ENCODE measurements at regions of chr12 and their contacts with region 1.

Region 1: DNA sequence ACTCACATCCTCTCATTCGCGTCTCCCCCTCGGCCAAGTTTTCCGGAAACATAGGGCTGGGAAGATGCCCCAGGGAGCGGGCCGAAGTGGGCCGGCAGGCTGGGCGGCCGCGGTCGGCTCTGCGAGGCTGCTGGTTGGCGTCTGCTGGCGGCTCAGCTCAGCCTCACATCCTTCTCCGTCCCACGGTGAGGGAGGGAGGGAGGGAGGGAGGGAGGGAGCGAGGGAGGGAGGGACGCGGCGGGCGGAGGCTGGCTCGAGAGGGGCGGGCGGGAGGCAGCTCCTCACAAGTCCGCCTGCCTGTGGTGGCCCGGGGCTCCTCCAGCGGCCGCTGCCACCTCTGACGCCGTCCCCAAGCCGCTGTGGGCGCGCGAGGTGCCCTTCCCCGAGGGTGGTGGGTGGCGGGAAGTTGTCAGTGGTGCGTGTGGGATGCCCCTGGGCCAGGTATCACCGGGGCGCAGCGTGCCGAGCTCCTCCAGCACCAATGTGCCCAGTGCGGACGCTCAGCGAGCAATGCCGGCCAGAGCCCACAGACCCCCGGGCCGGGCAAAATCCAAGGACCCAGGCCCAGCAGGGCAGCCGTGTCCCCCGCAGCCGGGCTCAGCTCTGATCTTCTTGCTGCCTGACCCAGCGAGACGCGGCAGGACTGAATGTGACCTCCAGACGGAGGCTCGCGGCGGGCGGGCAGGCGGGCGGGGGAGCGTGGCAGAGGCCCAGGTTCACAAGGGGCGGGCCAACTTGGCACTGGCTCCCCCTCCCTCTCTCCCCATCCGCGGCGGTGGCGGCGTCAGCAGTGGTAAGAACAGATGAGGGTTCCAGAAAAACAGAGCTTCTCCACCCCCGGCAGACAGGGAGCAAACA is 94.0 kb downstream of the RFLNA start:
- DNase-seq: peak; percentile 74 to 94
- ATAC-seq: peak; percentile 30 to 56
- H3K4me3 ChIP-seq: peak overlapping the region; percentile 79
- H3K27ac ChIP-seq: peak overlapping the region; percentile 99 to 100
- H3K4me1 ChIP-seq: peaks cover 69% of the 10 kb centered on the region
- CTCF ChIP-seq: no peak
- EP300 ChIP-seq: peak; percentile 31 to 44; a peak in 2 of 5 replicates
- POLR2A ChIP-seq: peak; percentile 41
- RAD21 ChIP-seq: no peak; a peak in 1 of 5 replicates

Region 2: DNA sequence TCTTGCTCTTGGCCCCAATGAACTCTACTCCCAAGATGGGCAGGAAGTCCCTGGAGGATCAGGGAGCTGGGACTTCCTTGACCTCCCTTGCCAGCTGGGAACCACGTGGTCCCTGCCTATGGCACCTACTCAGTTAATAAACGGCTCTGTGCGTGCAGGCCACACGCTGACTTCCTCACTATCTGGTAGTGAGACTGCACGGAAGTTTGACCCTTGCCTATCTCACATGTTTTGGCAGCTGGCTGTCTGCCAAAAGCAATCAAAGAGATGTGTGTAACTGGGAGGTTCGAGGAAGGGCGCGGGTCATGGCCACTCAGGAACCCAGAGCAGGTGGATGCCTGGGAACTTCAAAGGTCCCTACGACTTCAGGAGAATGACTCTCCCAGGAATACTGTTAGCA is 36.1 kb before region 1 on chr12:
- CTCF ChIA-PET with region 1: interaction called, 11 read pairs
- POLR2A ChIA-PET with region 1: no interaction called
- DNase-seq: peak in 1 of 2 experiments; percentile 62
- ATAC-seq: peak in 1 of 2 experiments; percentile 6; a peak in 2 of 6 replicates
- H3K4me3 ChIP-seq: no peak overlapping the region
- H3K27ac ChIP-seq: peak overlapping the region; percentile 27 to 50; a peak in 4 of 6 replicates
- H3K4me1 ChIP-seq: peaks cover 12% of the 10 kb centered on the region
- CTCF ChIP-seq: no peak
- EP300 ChIP-seq: no peak
- POLR2A ChIP-seq: no peak
- RAD21 ChIP-seq: no peak

Region 3: GRCh38 chr12:124369055-124369900 is 19.6 kb before region 1 on chr12:
- CTCF ChIA-PET with region 1: interaction called, 62 read pairs
- POLR2A ChIA-PET with region 1: interaction called, 18 read pairs
- DNase-seq: peak in 1 of 2 experiments; percentile 97
- ATAC-seq: peak; percentile 71 to 82
- H3K4me3 ChIP-seq: peak overlapping the region; percentile 6; the same call in 1 of the 3 replicates
- H3K27ac ChIP-seq: peak overlapping the region; percentile 92 to 98
- H3K4me1 ChIP-seq: peaks cover 81% of the 10 kb centered on the region
- CTCF ChIP-seq: no peak; the same call in 2 of the 3 replicates
- EP300 ChIP-seq: peak; percentile 92 to 96
- POLR2A ChIP-seq: no peak
- RAD21 ChIP-seq: peak in 1 of 2 experiments; percentile 45; a peak in 3 of 5 replicates

Region 4: DNA sequence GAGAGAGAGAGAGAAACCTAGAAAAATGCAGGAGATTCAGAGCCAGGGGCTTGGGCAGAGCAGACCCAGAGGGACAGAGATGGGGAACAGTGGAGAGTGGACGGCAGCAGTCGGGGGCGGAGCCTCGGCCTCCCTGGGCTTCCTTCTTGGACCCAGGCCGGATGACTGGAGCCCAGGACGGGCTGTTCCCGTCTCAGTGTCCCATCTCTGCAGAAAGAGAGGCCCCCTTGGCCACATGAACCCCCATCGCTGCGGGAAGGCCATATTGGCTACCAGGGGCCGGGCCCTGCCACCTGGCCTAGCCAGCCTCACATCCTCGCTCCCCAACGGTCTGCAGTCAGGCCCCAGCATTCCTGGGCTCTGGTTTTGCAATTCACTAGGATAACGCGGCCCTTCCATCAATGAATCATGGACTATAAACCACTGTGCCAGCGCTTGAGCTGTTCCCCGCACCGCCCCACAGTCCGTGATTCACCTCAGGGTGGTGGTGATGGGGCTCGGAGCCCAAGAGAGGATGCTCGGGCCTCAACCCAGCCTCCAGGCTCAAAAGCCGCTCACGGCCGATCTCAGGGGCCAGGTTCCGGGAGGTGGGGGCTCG is 22.5 kb after region 1 on chr12:
- CTCF ChIA-PET with region 1: interaction called, 87 read pairs
- POLR2A ChIA-PET with region 1: interaction called, 4 read pairs
- DNase-seq: peak in 1 of 2 experiments; percentile 57
- ATAC-seq: peak; percentile 80 to 83
- H3K4me3 ChIP-seq: no peak overlapping the region
- H3K27ac ChIP-seq: peak overlapping the region; percentile 62 to 94
- H3K4me1 ChIP-seq: peaks cover 27% of the 10 kb centered on the region
- CTCF ChIP-seq: no peak
- EP300 ChIP-seq: no peak
- POLR2A ChIP-seq: no peak
- RAD21 ChIP-seq: no peak

Measured in A549 (cell line).